ENCODE measurements at regions of chr12 and their contacts with region 1.

Region 1: GRCh38 chr12:92649511-92650227 is 53.1 kb upstream of the PLEKHG7 start:
- DNase-seq: peak; percentile 63

Region 2: GRCh38 chr12:91382081-91382543 is 1267.6 kb before region 1 on chr12:
- in situ Hi-C with region 1: loop called (anchors 25 kb)
- DNase-seq: peak; percentile 76

Region 3: GRCh38 chr12:92199819-92200576 is 449.7 kb before region 1 on chr12:
- in situ Hi-C with region 1: no loop called
- DNase-seq: no peak

Measured in KBM-7 (cell line).